Cardiac septum (tissue), 1 donor: ENCODE measurements at regions of chr10 and their contacts with region 1.

Region 1: DNA sequence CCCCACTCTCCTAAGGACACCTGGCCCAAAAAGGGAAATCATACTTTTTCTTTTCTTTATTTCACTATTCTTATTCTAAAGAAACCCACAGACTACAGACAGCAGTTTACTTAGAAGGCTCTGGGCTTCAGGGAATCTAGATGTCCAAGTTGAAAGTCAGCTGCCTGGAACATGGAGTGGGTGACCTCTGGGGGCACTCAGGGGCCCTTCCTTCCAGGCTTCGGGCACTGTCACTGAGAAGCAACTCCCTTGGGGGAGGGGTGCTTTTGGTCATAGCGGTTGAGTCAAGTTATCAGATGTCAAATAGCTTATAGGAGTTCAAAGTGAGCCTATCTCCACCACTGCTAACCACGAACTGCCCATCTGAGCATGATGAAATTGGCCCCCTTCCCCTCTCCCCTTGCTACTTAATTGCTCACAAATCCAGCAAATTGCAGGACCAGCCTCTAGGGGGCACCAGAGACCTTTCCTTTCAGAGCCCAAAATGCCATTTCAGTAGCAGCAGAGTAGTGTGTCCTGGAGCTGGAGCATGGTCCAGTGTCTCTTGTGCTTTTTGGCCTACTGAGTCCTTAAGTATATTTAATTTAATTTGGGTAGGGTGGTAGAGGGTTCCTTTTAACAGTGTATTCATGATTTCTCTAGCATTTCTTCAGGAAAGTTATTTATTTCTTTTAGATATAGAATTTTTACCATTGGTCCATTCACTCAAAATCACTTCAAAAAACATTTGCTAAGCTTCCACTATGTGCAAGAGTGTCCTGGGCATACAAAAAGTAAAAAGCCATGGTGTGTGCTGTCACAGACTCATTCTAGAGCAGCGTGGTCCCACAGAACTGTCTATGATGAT is 463.8 kb downstream of the KCNMA1 start:
- DNase-seq: no peak

Region 2: GRCh38 chr10:77391605-77392235 is 217.9 kb after region 1 on chr10:
- intact Hi-C with region 1: loop called (anchors 10 kb)
- DNase-seq: peak; percentile 76

Region 3: DNA sequence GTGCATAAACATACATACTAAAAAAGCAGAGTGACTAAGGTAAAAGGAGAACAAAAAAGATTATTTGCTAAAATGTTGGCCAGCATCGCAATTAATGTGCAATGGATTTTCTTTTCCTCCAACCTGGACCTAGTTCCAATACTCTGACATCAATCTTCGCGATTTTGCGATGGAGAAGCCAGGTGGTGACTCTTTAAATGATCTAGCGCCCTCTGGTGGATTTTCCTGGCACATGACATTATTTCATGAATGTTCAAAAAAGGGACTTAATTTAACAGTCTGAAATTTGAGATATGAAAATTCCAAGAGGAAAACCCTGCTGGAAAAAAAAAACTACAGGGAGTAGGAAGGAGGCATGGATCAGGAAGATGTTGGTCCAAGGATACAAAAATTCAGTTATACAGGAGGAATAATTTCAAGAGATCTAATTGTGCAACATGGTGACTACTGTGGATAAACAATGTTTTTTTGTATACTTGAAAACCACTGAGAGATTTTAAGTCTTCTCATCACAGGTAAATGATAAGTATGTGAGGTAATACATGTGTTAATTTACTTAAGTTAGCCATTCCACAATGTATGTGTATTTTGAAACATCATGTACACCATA is 468.1 kb after region 1 on chr10:
- intact Hi-C with region 1: loop called (anchors 1 kb)
- DNase-seq: no peak

Region 4: DNA sequence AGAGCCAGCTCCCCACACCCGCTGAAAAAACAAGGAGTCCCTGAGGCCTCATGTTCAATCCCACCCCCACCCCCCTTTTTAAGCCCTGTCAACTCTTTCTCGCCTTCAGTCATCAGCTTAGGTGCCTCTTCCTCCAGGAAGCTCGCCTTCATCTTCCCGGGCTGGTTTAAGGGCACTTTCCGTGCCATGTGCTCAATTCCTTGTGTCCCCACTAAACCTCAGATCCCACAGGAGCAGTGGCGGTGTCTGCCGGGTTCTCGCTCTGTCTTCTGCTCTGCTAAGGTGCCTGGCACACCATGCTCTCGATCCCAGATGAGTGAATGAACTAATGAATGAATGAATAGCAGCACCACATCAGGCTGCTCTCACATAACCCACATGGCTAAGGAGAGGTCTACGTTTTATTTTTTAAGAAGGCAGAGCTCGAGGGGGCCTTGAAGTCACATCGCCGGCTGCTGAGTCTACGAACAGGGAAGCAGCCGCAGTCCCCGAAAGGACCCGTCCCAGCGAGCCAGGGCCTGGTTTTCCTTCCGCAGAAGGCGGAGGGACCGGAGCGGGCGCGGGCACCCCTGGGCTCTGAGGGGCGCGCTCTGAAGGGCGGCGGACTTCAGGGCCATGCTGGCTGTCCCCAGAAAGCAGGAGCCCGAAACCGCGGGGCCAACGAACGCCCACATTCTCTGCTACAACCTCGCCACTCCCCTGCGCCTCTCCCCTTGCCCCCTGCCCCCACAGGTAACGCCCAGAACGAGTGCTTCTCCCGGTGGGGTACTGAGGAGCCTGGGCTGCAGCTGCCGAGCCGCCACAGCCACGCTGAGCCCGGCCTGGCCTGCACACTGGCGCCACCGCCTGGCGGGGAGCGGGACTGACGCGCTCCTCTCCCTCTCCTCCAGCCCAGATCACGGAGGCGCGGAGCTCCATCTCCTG is 537.2 kb after region 1 on chr10:
- intact Hi-C with region 1: loop called (anchors 2 kb)
- DNase-seq: peak; percentile 88